Caco-2 (cell line): ENCODE measurements at regions of chr11 and their contacts with region 1.

Region 1: DNA sequence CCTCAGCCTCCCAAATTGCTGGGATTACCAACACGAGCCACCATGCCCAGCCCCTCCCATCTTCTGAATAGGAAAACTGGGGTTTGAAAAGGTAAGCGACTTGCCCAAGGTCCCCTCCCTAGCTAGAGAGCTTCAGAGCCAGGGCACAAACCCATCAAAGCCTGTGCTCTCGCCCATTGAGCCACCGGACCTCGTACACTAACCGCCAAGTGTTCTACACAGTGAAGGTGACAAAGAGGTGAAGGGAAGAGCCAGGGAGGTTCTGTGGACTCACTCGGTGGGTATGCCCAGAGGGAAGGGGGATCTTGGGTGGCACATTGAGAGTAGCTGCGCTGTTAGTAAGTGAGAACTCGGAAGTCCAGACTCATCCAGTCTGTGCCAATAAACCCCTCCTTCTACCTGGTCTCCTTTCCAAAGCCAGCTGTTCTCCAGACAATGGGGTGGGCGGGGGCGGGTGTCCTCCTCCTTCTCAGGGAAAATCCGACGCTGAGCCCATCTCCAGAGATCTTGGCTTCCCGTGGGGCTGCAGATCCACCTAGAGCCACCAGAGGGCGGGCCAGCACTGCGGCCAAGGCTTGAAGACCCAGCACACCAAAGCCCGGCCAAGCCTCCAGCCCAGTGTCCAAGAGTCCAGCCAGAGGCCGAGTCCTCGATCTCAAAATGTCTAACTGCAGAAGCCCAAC is 3.2 kb upstream of the RTN4RL2 start:
- DNase-seq: peak; percentile 88 to 92
- H3K4me3 ChIP-seq: no peak overlapping the region
- H3K4me3 Mint-ChIP-seq: peak overlapping the region; percentile 85
- H3K27ac Mint-ChIP-seq: no peak overlapping the region
- H3K4me1 ChIP-seq: peaks cover 28% of the 10 kb centered on the region
- H3K4me1 Mint-ChIP-seq: peaks cover 20% of the 10 kb centered on the region
- H3K27me3 ChIP-seq: peaks cover 3% of the 10 kb centered on the region; the same call in 1 of the 2 replicates
- H3K27me3 Mint-ChIP-seq: peaks cover 15% of the 10 kb centered on the region
- CTCF ChIP-seq: peak; percentile 98 to 99

Region 2: DNA sequence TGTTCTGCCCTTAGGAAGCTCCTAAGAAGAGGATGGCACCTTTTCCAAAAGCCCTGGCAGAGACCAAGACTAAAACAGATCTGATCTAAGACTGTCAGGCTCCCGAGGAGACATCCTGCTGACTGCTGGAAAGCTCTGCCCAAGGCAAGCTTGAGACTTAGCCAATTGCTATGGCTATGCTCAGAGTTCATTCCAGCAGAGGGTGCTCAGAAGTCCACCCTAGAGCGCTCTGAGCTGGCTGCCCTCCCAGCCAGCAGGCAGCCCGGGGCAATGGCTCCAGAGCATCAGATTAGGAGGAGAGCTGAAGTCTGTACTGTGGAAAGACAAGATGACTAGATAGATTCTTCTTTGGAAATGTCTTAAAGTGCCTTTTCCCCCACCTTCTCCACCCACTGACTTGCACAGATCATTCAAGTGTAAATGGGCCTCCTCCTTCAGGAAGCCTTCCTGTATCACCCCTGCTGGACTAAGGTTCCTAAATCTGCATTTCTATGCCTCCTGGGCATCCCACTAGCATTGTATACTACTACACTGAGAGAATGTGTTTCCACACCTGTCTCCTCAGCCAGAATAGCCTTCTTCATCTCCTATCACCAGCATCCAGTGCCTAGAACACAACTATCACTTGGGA is 251.9 kb before region 1 on chr11:
- CTCF ChIA-PET with region 1: no interaction called
- POLR2A ChIA-PET with region 1: no interaction called
- intact Hi-C with region 1: no loop called
- DNase-seq: peak in 1 of 2 experiments; percentile 3
- H3K4me3 ChIP-seq: no peak overlapping the region
- H3K4me3 Mint-ChIP-seq: no peak overlapping the region
- H3K27ac Mint-ChIP-seq: no peak overlapping the region
- H3K4me1 ChIP-seq: no peaks in the 10 kb centered on the region
- H3K4me1 Mint-ChIP-seq: no peaks in the 10 kb centered on the region
- H3K27me3 ChIP-seq: peaks cover 1% of the 10 kb centered on the region; the same call in 1 of the 2 replicates
- H3K27me3 Mint-ChIP-seq: peaks cover 14% of the 10 kb centered on the region
- CTCF ChIP-seq: no peak

Region 3: DNA sequence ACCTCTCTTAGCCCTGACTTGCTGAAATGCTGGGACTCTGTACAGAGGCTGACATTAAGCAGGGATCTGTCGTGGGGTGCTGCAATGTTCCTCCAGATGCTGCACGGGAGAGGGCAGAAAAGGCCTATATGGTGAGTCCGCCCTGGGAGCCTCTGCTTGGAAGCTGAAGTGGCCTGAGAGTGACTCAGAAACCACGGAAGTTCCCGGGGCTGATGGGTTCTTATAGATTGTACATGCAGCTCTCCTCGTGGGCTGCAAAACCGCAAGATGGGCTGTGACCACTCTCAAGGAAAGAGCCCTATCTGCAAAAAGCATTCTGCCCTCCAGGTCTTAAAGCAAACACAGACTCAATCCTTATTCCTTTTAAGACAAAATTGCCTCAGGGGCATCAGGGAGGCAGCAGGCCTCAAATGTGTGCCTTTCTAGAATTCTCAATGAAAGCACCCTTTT is 24.4 kb before region 1 on chr11:
- CTCF ChIA-PET with region 1: interaction called, 7 read pairs
- POLR2A ChIA-PET with region 1: no interaction called
- intact Hi-C with region 1: loop called (anchors 1 kb)
- DNase-seq: no peak
- H3K4me3 ChIP-seq: no peak overlapping the region
- H3K4me3 Mint-ChIP-seq: no peak overlapping the region
- H3K27ac Mint-ChIP-seq: no peak overlapping the region
- H3K4me1 ChIP-seq: 0 out of 2 replicates have a peak, but pooled peaks cover 4% of the 10 kb centered on the region
- H3K4me1 Mint-ChIP-seq: peaks cover 10% of the 10 kb centered on the region
- H3K27me3 ChIP-seq: no peaks in the 10 kb centered on the region; the same call in 1 of the 2 replicates
- H3K27me3 Mint-ChIP-seq: peaks cover 2% of the 10 kb centered on the region
- CTCF ChIP-seq: no peak

Region 4: GRCh38 chr11:57474017-57474802 is 17.1 kb after region 1 on chr11:
- CTCF ChIA-PET with region 1: interaction called, 21 read pairs
- POLR2A ChIA-PET with region 1: interaction called, 4 read pairs
- intact Hi-C with region 1: loop called (anchors 1 kb)
- DNase-seq: no peak
- H3K4me3 ChIP-seq: no peak overlapping the region
- H3K4me3 Mint-ChIP-seq: no peak overlapping the region
- H3K27ac Mint-ChIP-seq: no peak overlapping the region
- H3K4me1 ChIP-seq: no peaks in the 10 kb centered on the region
- H3K4me1 Mint-ChIP-seq: peaks cover 6% of the 10 kb centered on the region
- H3K27me3 ChIP-seq: no peaks in the 10 kb centered on the region
- H3K27me3 Mint-ChIP-seq: no peaks in the 10 kb centered on the region
- CTCF ChIP-seq: no peak

Region 5: GRCh38 chr11:57480409-57481137 is 23.5 kb after region 1 on chr11:
- CTCF ChIA-PET with region 1: interaction called, 21 read pairs
- POLR2A ChIA-PET with region 1: interaction called, 4 read pairs
- intact Hi-C with region 1: loop called (anchors 1 kb)
- DNase-seq: peak; percentile 73 to 80
- H3K4me3 ChIP-seq: no peak overlapping the region
- H3K4me3 Mint-ChIP-seq: no peak overlapping the region
- H3K27ac Mint-ChIP-seq: peak overlapping the region; percentile 5
- H3K4me1 ChIP-seq: peaks cover 5% of the 10 kb centered on the region; the same call in 1 of the 2 replicates
- H3K4me1 Mint-ChIP-seq: peaks cover 16% of the 10 kb centered on the region
- H3K27me3 ChIP-seq: no peaks in the 10 kb centered on the region
- H3K27me3 Mint-ChIP-seq: no peaks in the 10 kb centered on the region
- CTCF ChIP-seq: peak; percentile 61 to 74

Region 6: GRCh38 chr11:57562596-57562995 is 105.5 kb after region 1 on chr11:
- CTCF ChIA-PET with region 1: interaction called, 5 read pairs
- POLR2A ChIA-PET with region 1: no interaction called
- intact Hi-C with region 1: loop called (anchors 1 kb)
- DNase-seq: peak in 1 of 2 experiments; percentile 53
- H3K4me3 ChIP-seq: no peak overlapping the region
- H3K4me3 Mint-ChIP-seq: no peak overlapping the region
- H3K27ac Mint-ChIP-seq: peak overlapping the region; percentile 19
- H3K4me1 ChIP-seq: peaks cover 6% of the 10 kb centered on the region; the same call in 1 of the 2 replicates
- H3K4me1 Mint-ChIP-seq: peaks cover 7% of the 10 kb centered on the region
- H3K27me3 ChIP-seq: no peaks in the 10 kb centered on the region
- H3K27me3 Mint-ChIP-seq: no peaks in the 10 kb centered on the region
- CTCF ChIP-seq: peak; percentile 26 to 30

Region 7: DNA sequence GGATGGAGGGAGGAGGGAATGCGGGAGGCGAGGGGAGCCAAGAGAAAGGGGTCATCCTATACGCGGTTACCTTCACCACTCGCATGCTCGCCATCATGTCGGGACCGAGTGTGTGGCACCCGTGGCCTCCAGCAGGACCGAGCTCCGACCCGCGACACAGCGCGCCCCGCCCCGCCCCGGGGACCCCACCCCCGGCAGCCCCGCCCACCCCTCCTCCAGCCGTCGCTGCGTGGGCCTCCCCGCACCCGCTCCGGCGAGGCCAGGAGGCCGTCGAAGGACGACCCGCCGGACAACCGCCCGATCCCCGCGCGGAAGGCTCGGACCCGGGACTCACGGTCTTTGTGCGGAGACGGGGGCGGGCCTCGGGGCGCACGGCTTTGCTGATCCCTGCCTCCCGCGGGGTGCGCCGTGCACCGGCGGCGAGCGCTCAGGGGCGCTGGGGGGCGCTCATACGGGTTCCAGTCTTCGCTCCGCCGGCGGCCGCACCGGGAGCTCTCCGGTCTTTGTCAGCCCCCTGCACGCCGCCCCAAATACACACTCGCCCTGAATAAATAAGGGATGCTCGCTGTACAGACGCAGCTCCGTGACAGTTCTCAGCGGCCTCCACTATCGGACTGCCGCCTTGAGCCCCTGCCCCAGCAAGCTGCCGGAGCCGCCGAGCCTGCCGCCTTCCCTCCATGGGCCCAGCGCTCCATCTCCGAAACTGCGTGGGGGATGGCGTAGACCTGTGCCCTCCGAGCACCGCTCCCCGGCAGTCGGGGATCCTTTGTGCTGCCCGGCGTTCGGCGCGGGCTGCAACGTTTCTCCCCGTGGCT is 110.6 kb after region 1 on chr11 and contains the start of gene UBE2L6:
- CTCF ChIA-PET with region 1: interaction called, 5 read pairs
- POLR2A ChIA-PET with region 1: no interaction called
- intact Hi-C with region 1: loop called (anchors 1 kb)
- DNase-seq: peak; percentile 55 to 67
- H3K4me3 ChIP-seq: peak within 1 kb of the TSS; percentile 54
- H3K4me3 Mint-ChIP-seq: peak within 1 kb of the TSS; percentile 96
- H3K27ac Mint-ChIP-seq: peak within 1 kb of the TSS; percentile 40
- H3K4me1 ChIP-seq: peaks cover 10% of the 10 kb centered on the region; the same call in 1 of the 2 replicates
- H3K4me1 Mint-ChIP-seq: peaks cover 14% of the 10 kb centered on the region
- H3K27me3 ChIP-seq: no peaks in the 10 kb centered on the region
- H3K27me3 Mint-ChIP-seq: no peaks in the 10 kb centered on the region
- CTCF ChIP-seq: peak in 1 of 2 experiments; percentile 49
- total RNA-seq, gene UBE2L6: 16.7 and 20.2 TPM in 2 replicates

Region 8: GRCh38 chr11:57644748-57645688 is 187.9 kb after region 1 on chr11:
- CTCF ChIA-PET with region 1: interaction called, 20 read pairs
- POLR2A ChIA-PET with region 1: interaction called, 3 read pairs
- intact Hi-C with region 1: loop called (anchors 1 kb)
- DNase-seq: peak; percentile 86 to 91
- H3K4me3 ChIP-seq: no peak overlapping the region
- H3K4me3 Mint-ChIP-seq: no peak overlapping the region
- H3K27ac Mint-ChIP-seq: no peak overlapping the region
- H3K4me1 ChIP-seq: peaks cover 17% of the 10 kb centered on the region
- H3K4me1 Mint-ChIP-seq: peaks cover 8% of the 10 kb centered on the region
- H3K27me3 ChIP-seq: peaks cover 2% of the 10 kb centered on the region; the same call in 1 of the 2 replicates
- H3K27me3 Mint-ChIP-seq: peaks cover 9% of the 10 kb centered on the region
- CTCF ChIP-seq: peak; percentile 91 to 96